Mammary epithelial cell (primary cell): ENCODE measurements at regions of chr3 and their contacts with region 1.

Region 1: DNA sequence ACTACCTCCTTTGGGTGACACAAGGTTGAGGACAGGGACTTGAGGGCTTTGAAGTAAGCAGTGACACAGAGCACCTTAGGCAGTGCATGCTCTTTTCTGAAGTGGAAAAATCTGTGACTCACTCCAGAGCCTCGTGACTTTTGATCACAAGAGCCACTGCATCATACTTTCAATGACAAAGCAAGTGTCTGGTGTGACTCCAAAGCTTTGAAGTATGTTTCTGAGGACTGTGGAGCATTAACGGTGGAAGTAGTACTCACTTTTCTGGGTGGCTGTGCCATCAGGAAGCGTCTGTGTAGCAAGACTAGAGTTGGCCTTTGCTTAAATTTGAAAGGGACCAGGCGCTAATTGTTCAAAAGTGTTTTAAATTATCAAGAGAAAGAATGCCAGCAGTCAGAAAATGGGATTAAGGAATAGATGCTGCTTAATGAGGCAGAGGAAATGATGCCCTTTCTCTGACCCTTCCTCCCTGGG is 210.7 kb upstream of the TRIM42 start:
- DNase-seq: peak; percentile 58
- H3K4me3 ChIP-seq: no peak overlapping the region
- H3K27ac ChIP-seq: no peak overlapping the region
- H3K4me1 ChIP-seq: peaks cover 6% of the 10 kb centered on the region
- H3K27me3 ChIP-seq: no peaks in the 10 kb centered on the region
- CTCF ChIP-seq: peak in 1 of 2 donors; percentile 20

Region 2: GRCh38 chr3:140423146-140423545 is 44.0 kb before region 1 on chr3:
- CTCF ChIA-PET with region 1: no interaction called
- dilution Hi-C with region 1: no loop called
- in situ Hi-C with region 1: no loop called
- intact Hi-C with region 1: loop called (anchors 1 kb)
- DNase-seq: no peak
- H3K4me3 ChIP-seq: no peak overlapping the region
- H3K27ac ChIP-seq: no peak overlapping the region
- H3K4me1 ChIP-seq: peaks cover 27% of the 10 kb centered on the region
- H3K27me3 ChIP-seq: no peaks in the 10 kb centered on the region
- CTCF ChIP-seq: no peak

Region 3: GRCh38 chr3:140455521-140456214 is 11.5 kb before region 1 on chr3:
- CTCF ChIA-PET with region 1: no interaction called
- dilution Hi-C with region 1: no loop called
- in situ Hi-C with region 1: no loop called
- intact Hi-C with region 1: no loop called
- DNase-seq: no peak
- H3K4me3 ChIP-seq: no peak overlapping the region
- H3K27ac ChIP-seq: no peak overlapping the region
- H3K4me1 ChIP-seq: no peaks in the 10 kb centered on the region
- H3K27me3 ChIP-seq: no peaks in the 10 kb centered on the region
- CTCF ChIP-seq: no peak